ENCODE measurements at regions of chr13 and their contacts with region 1.

Region 1: DNA sequence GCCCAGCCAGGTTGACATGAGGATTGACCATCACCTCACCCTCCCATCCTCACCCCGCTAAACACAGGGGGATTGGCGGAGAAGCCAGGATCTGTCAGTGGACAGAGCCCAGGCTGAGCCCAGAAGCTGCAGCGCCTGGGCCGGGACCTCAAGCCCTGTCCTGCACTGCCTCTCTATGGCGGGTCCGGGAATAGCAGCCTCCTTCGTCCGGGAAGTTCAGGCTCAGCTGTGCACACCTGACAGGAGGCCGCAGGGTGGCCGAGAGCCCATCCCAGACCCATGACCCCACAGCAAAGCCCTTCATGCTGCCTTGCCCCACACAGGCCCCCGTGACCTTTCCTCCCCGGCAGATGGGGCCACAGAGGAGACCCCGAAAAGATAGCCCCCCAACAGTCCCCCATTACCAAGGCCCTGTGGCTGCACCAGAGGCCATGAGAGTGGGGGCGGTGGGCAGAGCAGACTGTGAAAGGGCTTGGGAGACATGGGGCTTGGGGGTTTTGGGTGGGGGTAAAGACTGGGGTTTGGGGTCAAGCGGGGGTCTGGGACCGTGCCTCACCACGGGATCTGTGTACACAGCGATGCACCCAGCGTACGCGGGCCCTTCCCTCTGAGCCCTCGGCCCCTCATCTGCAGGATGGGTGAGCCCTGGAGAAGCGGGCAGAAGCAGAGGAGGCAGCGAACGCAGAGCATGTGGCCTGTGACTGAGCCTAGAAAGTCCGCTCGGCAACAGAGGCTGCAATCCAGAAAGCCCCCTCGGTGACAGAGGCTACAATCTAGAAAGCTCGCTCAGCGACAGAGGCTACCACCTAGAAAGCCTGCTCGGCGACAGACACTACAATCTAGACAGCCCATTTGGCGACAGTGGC is 68.1 kb downstream of the SPACA7 start:
- DNase-seq: peak; percentile 69

Region 2: GRCh38 chr13:111202745-111203144 is 1241.5 kb before region 1 on chr13:
- intact Hi-C with region 1: no loop called
- DNase-seq: no peak

Region 3: DNA sequence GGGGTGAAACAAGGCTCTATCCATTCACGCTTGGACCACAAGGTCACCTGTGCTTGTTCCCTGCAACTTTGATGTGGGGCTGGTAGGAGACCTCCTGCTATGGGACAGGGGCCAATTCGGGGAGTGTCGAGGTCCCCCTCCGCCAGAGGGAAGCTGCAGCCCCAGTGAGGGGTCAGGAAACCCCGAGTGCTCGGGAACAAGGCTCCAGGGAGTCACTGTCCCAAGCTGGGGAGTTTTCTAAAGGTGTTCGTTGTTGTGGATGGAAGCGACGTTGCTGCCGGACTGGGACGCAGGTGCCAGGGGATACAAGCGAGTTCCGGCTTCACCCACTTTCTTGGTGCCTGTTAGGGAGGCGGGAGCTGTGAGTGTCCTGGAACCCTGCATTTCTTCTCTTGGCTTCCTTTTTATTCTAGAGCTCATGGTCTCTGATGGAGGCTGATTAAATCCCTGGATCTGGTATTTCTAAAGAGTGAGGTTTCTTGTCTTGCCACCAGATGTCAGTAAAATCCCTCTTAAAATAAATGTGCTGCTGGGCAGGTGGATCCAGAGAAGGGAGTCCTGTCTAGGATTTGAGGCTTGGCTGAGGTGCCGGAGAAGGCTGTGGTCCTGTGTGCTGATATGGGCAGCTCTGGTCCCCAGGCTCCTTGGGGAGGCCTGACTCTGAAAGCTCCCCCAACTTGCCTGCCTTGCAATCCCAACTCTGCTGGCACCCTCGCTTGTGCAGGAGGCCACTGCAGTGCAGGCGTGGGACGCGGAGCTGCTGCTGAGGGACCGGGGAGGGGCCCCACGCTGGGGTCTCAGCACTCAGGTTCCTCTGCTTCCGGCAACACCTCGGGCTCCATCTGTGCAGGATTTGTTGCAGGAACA is 969.9 kb before region 1 on chr13:
- intact Hi-C with region 1: loop called (anchors 10 kb)
- DNase-seq: peak; percentile 72

Region 4: DNA sequence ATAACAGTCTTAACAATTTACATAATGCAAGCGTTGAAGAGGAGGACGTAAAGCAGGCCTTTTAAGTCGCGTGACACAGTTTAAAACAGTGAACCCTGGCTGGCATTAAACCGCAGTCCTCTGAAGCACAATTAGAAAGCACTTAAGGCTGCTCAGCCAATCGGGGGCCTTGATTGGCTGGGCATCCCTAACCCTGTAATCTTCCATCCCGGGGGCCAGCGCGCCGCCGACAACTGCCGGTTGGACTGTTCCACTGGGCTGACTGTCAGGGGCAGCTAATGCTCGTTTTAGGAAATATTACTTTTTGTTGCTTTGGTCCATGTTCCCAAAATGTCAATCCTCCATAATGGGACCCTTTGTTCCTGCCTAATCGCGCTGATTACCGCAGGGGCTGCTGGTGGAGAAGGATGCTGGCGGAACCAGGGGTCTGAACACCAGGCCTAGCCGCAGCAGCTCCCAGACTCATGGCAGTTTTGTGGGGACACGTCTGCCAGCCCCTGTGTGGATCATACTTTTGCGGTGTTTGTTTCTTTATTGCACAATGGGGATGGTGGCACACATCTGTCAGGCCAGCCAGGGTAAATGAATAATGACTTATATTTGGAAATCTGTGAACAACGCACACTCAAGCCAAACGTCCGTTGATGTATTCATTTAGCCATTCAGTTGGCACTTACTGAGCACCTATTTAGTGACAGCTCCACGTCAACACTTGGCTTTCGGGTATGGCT is 195.2 kb before region 1 on chr13:
- intact Hi-C with region 1: loop called in 1 of 2 experiments (anchors 5 kb)
- DNase-seq: no peak